Activated naive CD4-positive, alpha-beta T cell treated with anti-CD3 and anti-CD28 coated beads for 36 hours (primary cell): ENCODE measurements at regions of chr4 and their contacts with region 1.

Region 1: GRCh38 chr4:186137196-186137794 is 32.8 kb downstream of the FAM149A start:
- DNase-seq: no peak
- H3K4me3 Mint-ChIP-seq: no peak overlapping the region
- H3K27ac Mint-ChIP-seq: no peak overlapping the region
- H3K4me1 Mint-ChIP-seq: peaks cover 6% of the 10 kb centered on the region
- H3K27me3 Mint-ChIP-seq: no peaks in the 10 kb centered on the region

Region 2: DNA sequence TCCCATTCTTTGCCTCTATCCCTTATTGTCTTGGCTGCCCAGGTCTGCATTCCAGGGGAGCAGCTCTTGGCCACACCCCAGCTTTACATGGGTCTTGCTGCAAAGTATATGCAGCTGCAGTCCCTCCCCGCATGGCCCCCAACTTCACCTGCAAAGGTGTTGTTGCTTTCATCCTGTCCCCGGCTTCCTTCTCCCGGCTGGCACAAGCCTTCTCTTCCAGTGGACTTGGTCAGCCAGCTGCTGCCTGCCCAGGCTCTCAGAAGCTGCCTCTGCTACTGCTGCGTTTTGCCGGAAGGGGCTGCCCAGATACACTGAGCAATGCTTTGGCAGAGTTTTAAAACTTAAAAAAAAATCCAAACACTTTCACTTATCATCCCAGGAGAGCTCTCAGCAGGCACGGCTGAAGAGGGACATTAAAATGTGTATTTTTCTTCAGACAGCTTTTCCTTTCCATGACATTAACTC is 480.8 kb before region 1 on chr4:
- CTCF ChIA-PET with region 1: no interaction called
- intact Hi-C with region 1: no loop called
- DNase-seq: no peak
- H3K4me3 Mint-ChIP-seq: no peak overlapping the region
- H3K27ac Mint-ChIP-seq: no peak overlapping the region
- H3K4me1 Mint-ChIP-seq: no peaks in the 10 kb centered on the region
- H3K27me3 Mint-ChIP-seq: peaks cover 7% of the 10 kb centered on the region

Region 3: DNA sequence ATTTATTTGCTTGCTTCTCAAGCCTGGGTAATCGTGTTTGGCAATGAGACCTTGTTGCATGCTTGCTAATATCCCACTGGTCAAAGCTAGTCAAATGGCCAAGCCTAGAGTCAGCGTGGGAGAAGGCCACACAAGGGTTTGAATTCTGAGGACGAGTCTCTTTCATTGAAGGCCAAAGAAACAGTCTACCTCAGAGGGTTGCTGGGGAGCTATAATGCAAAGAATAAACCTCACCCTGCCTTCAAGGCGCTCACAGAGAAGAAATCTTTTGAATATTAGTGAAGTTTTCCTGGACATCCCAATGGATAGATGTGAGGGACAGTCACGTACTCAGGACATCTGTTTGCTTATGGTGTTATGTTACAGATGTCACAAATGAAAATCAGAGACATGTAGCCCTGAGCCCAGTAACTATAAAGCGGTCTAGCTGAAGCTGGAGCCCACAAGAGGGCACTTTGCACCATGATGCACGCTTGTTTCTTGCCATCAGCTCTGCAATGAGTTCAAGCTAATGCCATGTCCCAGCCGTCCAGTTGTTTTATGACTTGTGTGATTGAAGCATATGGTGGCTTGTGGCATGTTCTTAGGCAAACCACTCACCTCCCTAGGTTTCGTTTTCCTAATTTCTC is 69.4 kb before region 1 on chr4:
- CTCF ChIA-PET with region 1: interaction called, 10 read pairs
- intact Hi-C with region 1: loop called (anchors 1 kb)
- DNase-seq: peak; percentile 65
- H3K4me3 Mint-ChIP-seq: no peak overlapping the region
- H3K27ac Mint-ChIP-seq: no peak overlapping the region
- H3K4me1 Mint-ChIP-seq: peaks cover 11% of the 10 kb centered on the region
- H3K27me3 Mint-ChIP-seq: peaks cover 7% of the 10 kb centered on the region